Right ventricle myocardium inferior (tissue), 1 donor: ENCODE measurements at regions of chr4 and their contacts with region 1.

Region 1: DNA sequence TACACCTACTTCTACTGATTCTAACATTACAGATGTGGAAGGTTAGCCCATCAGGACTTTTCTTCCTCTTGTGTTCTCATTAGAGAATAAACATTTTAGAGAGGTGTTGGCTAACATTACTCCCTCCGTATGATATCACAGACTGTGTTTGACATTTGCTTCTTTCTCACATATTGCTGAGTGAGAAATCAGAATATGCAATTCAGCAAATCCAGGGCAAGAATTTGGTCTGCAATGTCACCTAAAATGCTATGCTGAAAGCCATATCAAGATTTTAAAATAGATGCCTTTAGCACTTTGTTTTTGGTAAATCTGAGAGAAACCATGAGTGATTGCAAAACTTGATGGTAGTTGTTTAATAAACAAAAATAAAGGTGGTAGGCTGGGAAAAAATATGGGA is 319.1 kb downstream of the C4orf33 start:
- DNase-seq: no peak
- ATAC-seq: no peak

Region 2: DNA sequence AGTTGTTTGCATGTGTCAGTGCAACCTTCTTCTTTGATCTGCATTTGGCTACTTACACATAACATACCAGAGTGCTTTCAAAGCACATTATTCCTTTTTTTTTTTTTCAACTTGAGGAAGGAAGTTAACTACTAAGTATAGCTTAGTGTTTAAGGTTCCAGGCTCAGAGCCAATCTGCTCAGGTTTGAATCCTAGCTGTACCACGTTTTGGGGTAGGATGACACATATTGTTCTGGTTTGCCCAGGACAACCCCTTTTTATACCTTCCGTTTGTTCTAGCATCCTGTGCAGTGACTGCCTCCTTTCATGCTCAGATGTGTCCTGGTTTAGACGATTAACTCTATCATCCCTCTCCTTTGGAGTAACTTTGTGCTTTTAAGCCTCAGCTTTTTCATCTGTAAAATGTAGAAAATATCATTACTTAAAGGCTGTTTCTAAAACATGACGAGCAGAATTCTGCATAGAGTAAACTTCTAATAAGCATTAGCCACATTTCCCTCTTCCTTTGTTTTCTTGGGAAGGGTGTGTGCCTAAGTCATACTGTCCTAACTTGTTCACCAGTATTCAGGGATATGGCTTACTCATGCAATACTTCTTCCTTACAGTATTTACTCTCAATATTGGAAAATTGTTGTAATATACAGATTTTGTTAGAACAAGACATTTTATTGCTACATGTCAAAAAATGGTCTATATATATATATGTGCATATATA is 37.7 kb before region 1 on chr4:
- intact Hi-C with region 1: no loop called
- DNase-seq: no peak
- ATAC-seq: no peak

Region 3: GRCh38 chr4:129429581-129430320 is 14.7 kb after region 1 on chr4:
- intact Hi-C with region 1: loop called (anchors 1 kb)
- DNase-seq: no peak
- ATAC-seq: no peak